Activated CD4-positive, alpha-beta memory T cell treated with anti-CD3 and anti-CD28 coated beads, Interleukin-2, amount 10 ng/mL, durations not matched to agents 7 days and 5 days (primary cell): ENCODE measurements at regions of chr12 and their contacts with region 1.

Region 1: GRCh38 chr12:54032627-54033100 is at the start of gene HOXC5:
- DNase-seq: peak; percentile 69
- H3K4me3 Mint-ChIP-seq: peak within 1 kb of the TSS; percentile 16
- H3K27ac Mint-ChIP-seq: no peak within 1 kb of the TSS
- H3K4me1 Mint-ChIP-seq: peaks cover 26% of the 10 kb centered on the region
- H3K27me3 Mint-ChIP-seq: peaks cover 85% of the 10 kb centered on the region
- total RNA-seq, gene HOXC5: not detected

Region 2: GRCh38 chr12:54017878-54018467 is 14.7 kb before region 1 on chr12:
- CTCF ChIA-PET with region 1: interaction called, 23 read pairs
- POLR2A ChIA-PET with region 1: interaction called, 4 read pairs
- DNase-seq: peak; percentile 74
- H3K4me3 Mint-ChIP-seq: peak overlapping the region; percentile 73
- H3K27ac Mint-ChIP-seq: no peak overlapping the region
- H3K4me1 Mint-ChIP-seq: peaks cover 23% of the 10 kb centered on the region
- H3K27me3 Mint-ChIP-seq: peaks cover 71% of the 10 kb centered on the region

Region 3: DNA sequence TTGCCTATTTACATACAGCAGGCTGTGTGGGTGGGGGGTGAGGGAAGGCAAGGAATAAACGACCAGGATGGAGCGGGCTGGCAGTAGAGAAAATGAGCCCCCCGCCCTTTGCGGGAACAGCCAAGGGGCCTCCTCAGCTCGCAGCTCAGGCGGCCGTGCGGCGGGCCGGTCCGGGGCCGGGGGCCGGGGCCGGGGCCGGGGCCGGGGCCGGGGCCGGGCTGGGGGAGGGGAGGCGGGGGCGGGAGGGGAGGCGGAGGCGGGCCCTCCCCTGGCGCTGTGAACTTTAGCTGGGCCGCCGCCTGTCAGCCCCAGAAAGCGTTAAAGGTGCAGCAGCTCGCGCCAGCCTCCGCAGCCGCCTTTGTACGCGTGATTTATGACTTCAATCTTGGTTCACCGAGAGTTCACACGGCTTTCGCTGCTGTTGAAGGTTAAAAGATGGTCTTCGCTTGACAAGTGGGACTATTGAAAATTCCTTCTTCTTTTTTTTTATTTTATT is 49.8 kb after region 1 on chr12:
- CTCF ChIA-PET with region 1: no interaction called
- POLR2A ChIA-PET with region 1: no interaction called
- DNase-seq: peak; percentile 40
- H3K4me3 Mint-ChIP-seq: peak overlapping the region; percentile 74
- H3K27ac Mint-ChIP-seq: peak overlapping the region; percentile 73
- H3K4me1 Mint-ChIP-seq: peaks cover 15% of the 10 kb centered on the region
- H3K27me3 Mint-ChIP-seq: peaks cover 38% of the 10 kb centered on the region

Region 4: DNA sequence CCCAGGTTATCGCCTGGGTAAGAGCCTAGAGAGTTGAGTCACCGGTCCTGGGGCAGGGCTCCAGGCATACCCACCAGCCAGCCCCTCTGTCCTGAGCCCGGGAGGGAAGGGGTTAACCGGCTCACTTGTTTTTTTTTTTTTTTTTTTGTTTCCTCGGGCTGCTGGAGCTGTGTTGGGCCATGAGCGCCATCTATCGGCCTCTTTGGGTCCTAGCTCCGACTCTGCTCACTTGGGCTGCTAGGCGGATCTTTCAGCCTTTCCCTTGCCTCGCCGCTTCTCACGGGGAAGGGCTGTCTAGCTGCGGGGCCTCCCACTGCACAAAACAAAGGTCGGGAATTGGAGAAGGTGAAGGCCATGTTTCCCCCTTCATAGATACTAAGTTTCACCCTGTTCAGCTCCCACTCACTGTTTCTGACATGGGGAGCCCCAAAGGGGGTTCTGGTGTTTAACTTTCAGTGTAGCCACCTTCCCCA is 158.9 kb after region 1 on chr12:
- CTCF ChIA-PET with region 1: interaction called, 107 read pairs
- POLR2A ChIA-PET with region 1: interaction called, 4 read pairs
- DNase-seq: peak; percentile 81
- H3K4me3 Mint-ChIP-seq: no peak overlapping the region
- H3K27ac Mint-ChIP-seq: no peak overlapping the region
- H3K4me1 Mint-ChIP-seq: peaks cover 24% of the 10 kb centered on the region
- H3K27me3 Mint-ChIP-seq: peaks cover 49% of the 10 kb centered on the region

Region 5: DNA sequence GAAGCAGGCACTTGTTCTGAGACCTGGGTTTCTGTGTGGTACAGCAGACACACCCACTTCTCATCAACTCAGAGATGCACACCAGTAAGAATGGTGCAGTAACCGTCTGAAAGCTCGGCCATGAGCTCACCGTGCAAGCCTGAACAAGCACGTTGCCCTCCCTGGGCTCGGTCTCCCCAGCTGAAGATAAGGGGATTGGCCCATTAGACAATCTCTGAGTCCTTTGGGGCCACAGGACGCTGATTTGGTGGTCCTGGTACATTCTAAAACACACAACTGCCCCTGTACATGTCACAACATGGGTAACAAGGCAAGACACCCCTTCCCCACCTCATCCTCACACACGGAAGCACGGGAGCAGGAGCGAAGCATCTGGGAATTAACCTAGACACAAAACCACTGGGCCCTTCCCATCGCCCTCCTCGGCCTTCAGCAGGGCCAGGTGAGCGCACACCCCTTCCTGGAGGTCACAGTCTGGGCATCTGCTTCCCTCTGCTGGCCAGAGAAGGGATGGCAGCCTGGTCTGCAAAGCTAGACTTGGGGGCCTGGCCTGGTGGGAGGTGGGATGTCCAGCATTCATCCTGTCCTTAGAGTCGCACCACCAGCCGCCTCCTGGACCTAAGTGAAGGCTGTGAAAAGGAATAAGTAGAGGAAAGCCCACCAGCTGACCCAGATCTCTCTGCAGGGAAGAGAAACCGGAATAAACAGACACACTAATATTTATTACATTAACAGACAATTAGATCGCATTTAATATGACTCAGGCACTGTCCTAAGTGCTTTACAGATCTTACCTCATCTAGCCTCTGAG is 175.0 kb after region 1 on chr12:
- CTCF ChIA-PET with region 1: interaction called, 48 read pairs
- POLR2A ChIA-PET with region 1: no interaction called
- DNase-seq: peak; percentile 80
- H3K4me3 Mint-ChIP-seq: no peak overlapping the region
- H3K27ac Mint-ChIP-seq: no peak overlapping the region
- H3K4me1 Mint-ChIP-seq: peaks cover 7% of the 10 kb centered on the region
- H3K27me3 Mint-ChIP-seq: peaks cover 54% of the 10 kb centered on the region